Heart right ventricle (tissue), 16 donors: ENCODE measurements at regions of chr12 and their contacts with region 1.

Region 1: DNA sequence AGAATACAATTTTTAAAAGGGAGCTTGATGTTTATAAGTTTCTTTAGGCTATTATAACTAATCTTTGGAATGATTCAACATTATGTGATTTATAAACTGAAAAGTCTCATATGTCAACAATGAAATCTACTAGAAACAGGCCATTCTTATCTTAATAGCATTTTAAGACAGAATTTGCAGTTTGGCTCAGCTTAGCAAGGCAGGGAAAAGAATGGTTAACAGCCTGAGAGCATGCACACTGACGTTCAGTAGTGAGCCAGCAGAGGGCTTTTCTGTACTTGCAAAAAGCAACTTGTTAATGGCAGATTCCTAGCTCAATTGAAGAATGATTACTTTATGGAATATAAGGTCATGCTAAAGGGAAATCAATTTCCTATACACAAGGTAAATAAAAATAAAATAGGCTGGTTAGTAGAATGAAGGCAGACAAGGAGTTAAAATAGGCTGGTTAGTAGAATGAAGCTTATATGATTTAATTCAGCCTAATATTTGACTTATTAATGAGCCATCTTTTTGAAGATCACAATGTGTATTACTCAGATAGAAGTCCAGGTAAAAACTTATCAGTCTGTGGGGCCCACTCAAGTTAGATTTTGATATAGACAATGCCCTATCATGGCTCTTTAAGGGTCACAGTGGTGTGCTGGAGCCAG is 95.9 kb downstream of the OTOGL start:
- DNase-seq: peak in 1 of 2 donors; percentile 29
- ATAC-seq: peak in 5 of 8 donors; percentile 53 to 82 (median 68)
- H3K4me3 ChIP-seq: no peak overlapping the region
- H3K27ac ChIP-seq: no peak overlapping the region
- H3K4me1 ChIP-seq: peaks cover 0 to 6% (median 0%) of the 10 kb centered on the region in 9 donors
- H3K27me3 ChIP-seq: no peaks in the 10 kb centered on the region
- CTCF ChIP-seq: peak; percentile 21 to 73 (median 53)

Region 2: DNA sequence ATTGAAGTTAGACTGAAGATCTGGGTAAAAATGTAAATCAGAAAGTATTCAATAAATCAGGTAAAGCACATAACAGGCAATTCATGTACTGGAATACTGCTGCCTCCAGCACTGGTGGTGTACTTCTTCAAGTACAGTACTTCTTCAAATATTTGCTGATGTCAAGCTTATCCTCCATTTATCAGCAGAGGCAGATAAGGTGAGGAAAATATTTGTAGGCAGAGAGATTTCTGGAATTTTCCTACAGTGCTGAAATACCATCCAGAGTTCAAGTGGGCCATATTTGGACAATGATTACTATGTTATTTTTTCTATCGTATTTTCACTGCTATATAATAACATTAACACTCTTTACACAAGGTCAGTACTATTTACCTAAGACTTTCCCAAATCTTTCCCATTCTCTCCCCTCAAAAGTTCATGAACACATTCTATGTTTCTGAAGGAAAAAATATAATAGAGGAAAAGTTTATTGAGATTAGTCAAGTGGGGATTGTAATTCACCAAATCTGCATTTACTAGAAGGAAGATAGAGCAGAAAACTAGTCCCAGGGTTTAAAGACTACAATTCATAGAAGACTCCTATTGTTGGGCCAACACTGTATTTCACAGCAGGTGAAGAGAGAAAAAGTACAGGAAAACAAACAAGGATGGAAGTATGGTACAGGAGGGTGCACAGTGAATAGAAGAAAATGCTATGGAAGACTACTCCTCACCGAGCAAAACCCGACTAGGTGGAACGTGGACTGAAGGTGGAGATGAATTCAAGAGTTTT is 645.5 kb before region 1 on chr12:
- intact Hi-C with region 1: loop called in 1 of 10 experiments (anchors 5 kb)
- DNase-seq: no peak
- ATAC-seq: no peak
- H3K4me3 ChIP-seq: no peak overlapping the region
- H3K27ac ChIP-seq: no peak overlapping the region
- H3K4me1 ChIP-seq: peaks cover 0 to 17% (median 8%) of the 10 kb centered on the region in 9 donors
- H3K27me3 ChIP-seq: no peaks in the 10 kb centered on the region
- CTCF ChIP-seq: no peak

Region 3: DNA sequence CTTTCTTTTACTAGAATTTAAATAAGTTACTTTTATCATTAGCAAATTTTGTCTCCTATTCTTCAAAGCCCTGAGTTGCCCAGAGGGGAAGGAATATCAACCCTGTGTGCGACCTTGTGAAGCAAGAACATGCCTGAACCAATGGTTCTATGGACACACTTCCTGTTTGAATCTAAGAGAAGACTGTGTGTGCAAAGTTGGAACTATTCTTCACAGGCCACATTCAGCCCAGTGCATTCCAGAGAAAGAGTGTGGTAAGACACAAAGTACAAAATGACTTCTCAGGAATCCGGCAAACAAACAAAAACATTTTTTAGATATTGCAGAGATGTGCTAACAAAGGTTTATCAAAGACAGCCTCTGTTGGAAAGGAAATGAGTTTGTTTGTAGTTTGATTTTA is 158.1 kb after region 1 on chr12:
- intact Hi-C with region 1: no loop called
- DNase-seq: no peak
- ATAC-seq: no peak
- H3K4me3 ChIP-seq: no peak overlapping the region
- H3K27ac ChIP-seq: no peak overlapping the region
- H3K4me1 ChIP-seq: no peaks in the 10 kb centered on the region
- H3K27me3 ChIP-seq: no peaks in the 10 kb centered on the region
- CTCF ChIP-seq: no peak

Region 4: DNA sequence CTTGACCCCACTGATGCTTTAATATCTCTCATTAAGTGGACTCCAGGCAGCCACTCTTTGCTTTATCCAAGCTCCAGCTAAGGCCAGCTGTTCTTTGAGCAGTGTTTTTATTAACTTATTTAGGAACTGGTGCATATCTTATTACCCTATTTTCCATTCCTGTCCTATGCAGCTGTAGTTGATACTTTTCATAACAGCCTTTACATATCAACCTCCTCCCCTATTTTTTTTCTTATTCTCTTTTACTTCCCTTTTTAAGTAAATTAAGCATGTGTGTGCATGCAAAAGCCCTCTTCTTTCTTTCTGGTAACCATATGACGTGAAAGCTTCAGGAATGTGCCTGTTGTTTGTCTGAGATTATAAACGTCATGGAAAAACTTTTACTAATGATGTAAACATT is 370.1 kb after region 1 on chr12:
- intact Hi-C with region 1: no loop called
- DNase-seq: no peak
- ATAC-seq: no peak
- H3K4me3 ChIP-seq: no peak overlapping the region
- H3K27ac ChIP-seq: no peak overlapping the region
- H3K4me1 ChIP-seq: no peaks in the 10 kb centered on the region
- H3K27me3 ChIP-seq: no peaks in the 10 kb centered on the region
- CTCF ChIP-seq: no peak